ENCODE measurements at regions of chr1 and their contacts with region 1.

Region 1: GRCh38 chr1:169601093-169601881 is 15.0 kb upstream of the F5 start:
- DNase-seq: no peak

Region 2: GRCh38 chr1:169427081-169427641 is 174.1 kb before region 1 on chr1 and contains the start of gene CCDC181:
- intact Hi-C with region 1: no loop called
- DNase-seq: peak; percentile 73 to 97 (median 86)

Region 3: DNA sequence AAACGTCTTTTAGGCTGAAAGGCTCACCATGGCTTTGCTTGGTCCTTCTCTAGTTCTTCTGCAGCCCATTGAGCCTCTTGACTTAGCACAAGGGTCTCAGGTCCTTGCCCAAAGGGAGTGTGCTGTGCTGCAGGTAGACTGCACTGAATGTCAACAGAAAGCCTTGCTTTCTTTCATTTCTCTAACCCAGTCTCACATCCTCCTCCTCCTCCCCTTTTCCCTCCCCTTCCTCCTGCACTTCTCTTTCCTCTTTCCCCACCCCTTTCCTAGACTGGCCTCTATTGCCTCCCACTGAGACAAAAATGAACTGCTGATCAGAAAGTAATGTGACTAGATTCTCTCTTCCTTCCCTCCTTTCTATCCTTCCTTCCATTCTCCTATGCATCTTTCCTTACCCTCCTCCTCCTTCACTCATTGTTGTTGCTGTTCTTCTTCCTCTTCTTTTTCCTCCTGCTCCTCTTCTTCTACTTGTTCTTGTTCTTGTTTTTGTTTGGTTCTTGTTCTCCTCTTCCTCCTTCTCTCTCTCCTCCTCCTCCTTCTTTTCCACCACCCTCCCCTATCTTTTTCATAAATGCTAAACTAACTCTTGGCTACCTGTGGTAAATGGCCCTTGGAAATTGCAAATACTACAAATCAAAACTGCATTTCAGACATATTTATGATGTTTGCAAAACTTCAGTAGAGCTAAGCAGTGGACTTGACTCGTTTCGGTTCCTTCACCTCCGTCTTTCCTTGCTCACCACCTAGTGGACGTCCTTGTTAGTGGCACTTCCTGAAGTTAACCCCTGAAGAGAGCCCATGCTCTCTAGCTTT is 110.4 kb after region 1 on chr1 and contains the start of gene SELL:
- intact Hi-C with region 1: loop called (anchors 1 kb)
- DNase-seq: peak in 6 of 10 donors; percentile 7 to 81 (median 51)

Region 4: DNA sequence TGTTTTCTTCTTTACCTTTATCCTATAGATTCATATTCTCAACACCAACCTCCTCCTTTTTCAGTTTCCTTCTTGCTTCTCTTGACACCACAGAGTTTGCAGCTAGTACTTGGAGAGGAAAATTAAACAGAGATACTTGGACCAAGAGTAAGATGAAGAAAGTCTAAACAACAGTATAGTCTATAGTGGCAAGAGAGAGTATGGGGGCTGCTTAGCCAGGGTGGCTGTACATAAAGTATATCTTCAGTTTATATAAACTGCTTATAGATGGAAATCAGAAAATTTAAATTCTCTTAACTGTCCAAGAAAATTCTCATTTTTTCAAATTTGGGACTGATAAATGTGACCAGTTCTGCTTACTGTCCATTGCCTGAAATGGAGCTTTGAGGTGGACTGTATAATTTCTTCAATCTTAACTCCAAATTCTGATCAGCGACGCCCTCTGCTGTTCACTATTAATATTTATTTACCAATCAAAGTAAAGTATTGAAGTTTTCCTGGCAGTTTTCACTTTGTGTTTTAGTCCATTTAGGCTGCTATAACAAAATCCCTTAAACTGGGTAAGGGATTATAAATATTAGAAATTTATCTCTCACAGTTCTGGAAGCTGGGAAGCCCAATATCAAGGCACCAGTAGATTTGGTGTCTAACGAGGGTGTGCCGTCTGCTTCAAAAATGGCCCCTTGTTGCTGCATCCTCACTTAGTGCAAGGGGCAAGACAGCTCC is 208.2 kb after region 1 on chr1:
- intact Hi-C with region 1: loop called (anchors 1 kb)
- DNase-seq: no peak